Naive thymus-derived CD4-positive, alpha-beta T cell (primary cell): ENCODE measurements at regions of chr9 and their contacts with region 1.

Region 1: DNA sequence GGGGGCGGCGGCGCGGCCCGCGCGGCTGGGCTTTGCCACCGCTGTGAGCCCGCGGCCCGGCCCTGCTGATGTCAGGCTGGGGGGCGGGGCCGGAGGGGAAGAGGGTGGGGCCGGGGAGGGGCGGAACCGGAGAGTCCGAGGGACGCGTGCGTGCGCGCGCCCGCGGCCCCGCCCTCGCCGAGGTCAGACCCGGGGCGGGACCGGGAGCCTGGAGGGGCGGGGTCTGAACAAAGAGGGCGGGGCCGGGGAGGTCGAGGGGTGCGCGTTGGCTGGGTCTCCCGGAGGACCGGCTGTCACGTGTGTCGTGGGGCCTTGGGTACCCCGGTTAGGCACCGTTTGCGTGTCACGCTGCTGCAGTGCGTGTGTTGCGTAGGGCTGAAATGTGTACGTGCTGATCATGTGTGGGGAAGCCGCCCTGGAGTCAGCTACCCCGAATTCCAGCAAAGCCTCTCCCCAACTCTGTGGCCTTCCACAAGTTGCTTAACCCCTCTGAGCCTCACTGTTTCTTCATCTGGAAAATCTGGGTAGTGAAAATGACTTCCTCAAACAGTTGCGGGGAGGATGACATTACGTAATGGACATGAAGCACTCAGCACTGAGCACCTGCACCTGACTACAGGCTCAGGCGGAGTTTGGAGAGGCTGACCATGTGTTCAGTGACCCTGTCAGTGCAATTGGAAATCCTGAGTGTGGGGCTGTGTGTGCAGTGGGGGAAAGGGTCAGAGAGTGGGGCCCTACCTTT is at the start of gene RALGDS:
- DNase-seq: peak; percentile 79 to 93 (median 88)
- ATAC-seq: peak; percentile 91
- H3K4me3 ChIP-seq: peak within 1 kb of the TSS; percentile 58
- H3K4me3 Mint-ChIP-seq: peak within 1 kb of the TSS; percentile 78 to 88 (median 82)
- H3K27ac ChIP-seq: peak within 1 kb of the TSS; percentile 93
- H3K27ac Mint-ChIP-seq: peak within 1 kb of the TSS; percentile 58 to 99 (median 98)
- H3K4me1 ChIP-seq: peaks cover 22 to 52% of the 10 kb centered on the region in 2 donors
- H3K4me1 Mint-ChIP-seq: peaks cover 27 to 74% (median 47%) of the 10 kb centered on the region in 7 donors
- H3K27me3 ChIP-seq: no peaks in the 10 kb centered on the region
- H3K27me3 Mint-ChIP-seq: no peaks in the 10 kb centered on the region
- total RNA-seq, gene RALGDS: 73.9 to 123 (median 79.7) TPM

Region 2: GRCh38 chr9:133103183-133103986 is 18.0 kb before region 1 on chr9:
- CTCF ChIA-PET with region 1: interaction called, 4 read pairs
- POLR2A ChIA-PET with region 1: interaction called, 7 read pairs
- intact Hi-C with region 1: loop called in 1 of 2 experiments (anchors 2 kb)
- DNase-seq: peak in 8 of 9 donors; percentile 30 to 70 (median 53)
- ATAC-seq: peak; percentile 84
- H3K4me3 ChIP-seq: no peak overlapping the region
- H3K4me3 Mint-ChIP-seq: peak overlapping the region in 1 of 10 donors; percentile 45
- H3K27ac ChIP-seq: no peak overlapping the region
- H3K27ac Mint-ChIP-seq: peak overlapping the region in 6 of 9 donors; percentile 25 to 82 (median 60)
- H3K4me1 ChIP-seq: no peaks in the 10 kb centered on the region
- H3K4me1 Mint-ChIP-seq: peaks cover 0 to 4% (median 0%) of the 10 kb centered on the region in 7 donors
- H3K27me3 ChIP-seq: no peaks in the 10 kb centered on the region
- H3K27me3 Mint-ChIP-seq: no peaks in the 10 kb centered on the region

Region 3: GRCh38 chr9:133133681-133134418 is 12.5 kb after region 1 on chr9:
- CTCF ChIA-PET with region 1: no interaction called
- POLR2A ChIA-PET with region 1: interaction called, 11 read pairs
- intact Hi-C with region 1: loop called (anchors 1 kb)
- DNase-seq: peak; percentile 69 to 94 (median 90)
- ATAC-seq: peak; percentile 92
- H3K4me3 ChIP-seq: peak overlapping the region; percentile 20
- H3K4me3 Mint-ChIP-seq: peak overlapping the region; percentile 72 to 85 (median 80)
- H3K27ac ChIP-seq: peak overlapping the region; percentile 92
- H3K27ac Mint-ChIP-seq: peak overlapping the region; percentile 99 to 100 (median 100)
- H3K4me1 ChIP-seq: peaks cover 57 to 68% of the 10 kb centered on the region in 2 donors
- H3K4me1 Mint-ChIP-seq: peaks cover 31 to 75% (median 63%) of the 10 kb centered on the region in 7 donors
- H3K27me3 ChIP-seq: no peaks in the 10 kb centered on the region
- H3K27me3 Mint-ChIP-seq: no peaks in the 10 kb centered on the region

Region 4: GRCh38 chr9:133306242-133307204 is 185.2 kb after region 1 on chr9:
- CTCF ChIA-PET with region 1: no interaction called
- POLR2A ChIA-PET with region 1: no interaction called
- intact Hi-C with region 1: no loop called
- DNase-seq: no peak
- ATAC-seq: no peak
- H3K4me3 ChIP-seq: no peak overlapping the region
- H3K4me3 Mint-ChIP-seq: no peak overlapping the region
- H3K27ac ChIP-seq: no peak overlapping the region
- H3K27ac Mint-ChIP-seq: no peak overlapping the region
- H3K4me1 ChIP-seq: no peaks in the 10 kb centered on the region
- H3K4me1 Mint-ChIP-seq: no peaks in the 10 kb centered on the region
- H3K27me3 ChIP-seq: no peaks in the 10 kb centered on the region
- H3K27me3 Mint-ChIP-seq: peaks cover 9 to 30% (median 18%) of the 10 kb centered on the region in 5 donors

Region 5: GRCh38 chr9:133320421-133320881 is 199.1 kb after region 1 on chr9:
- CTCF ChIA-PET with region 1: no interaction called
- POLR2A ChIA-PET with region 1: no interaction called
- intact Hi-C with region 1: no loop called
- DNase-seq: peak in 1 of 9 donors; percentile 15
- ATAC-seq: no peak
- H3K4me3 ChIP-seq: no peak overlapping the region
- H3K4me3 Mint-ChIP-seq: no peak overlapping the region
- H3K27ac ChIP-seq: no peak overlapping the region
- H3K27ac Mint-ChIP-seq: no peak overlapping the region
- H3K4me1 ChIP-seq: no peaks in the 10 kb centered on the region
- H3K4me1 Mint-ChIP-seq: peaks cover 0 to 7% (median 0%) of the 10 kb centered on the region in 7 donors
- H3K27me3 ChIP-seq: no peaks in the 10 kb centered on the region
- H3K27me3 Mint-ChIP-seq: peaks cover 0 to 3% (median 0%) of the 10 kb centered on the region in 5 donors